HepG2 (cell line): ENCODE measurements at regions of chr7 and their contacts with region 1.

Region 1: DNA sequence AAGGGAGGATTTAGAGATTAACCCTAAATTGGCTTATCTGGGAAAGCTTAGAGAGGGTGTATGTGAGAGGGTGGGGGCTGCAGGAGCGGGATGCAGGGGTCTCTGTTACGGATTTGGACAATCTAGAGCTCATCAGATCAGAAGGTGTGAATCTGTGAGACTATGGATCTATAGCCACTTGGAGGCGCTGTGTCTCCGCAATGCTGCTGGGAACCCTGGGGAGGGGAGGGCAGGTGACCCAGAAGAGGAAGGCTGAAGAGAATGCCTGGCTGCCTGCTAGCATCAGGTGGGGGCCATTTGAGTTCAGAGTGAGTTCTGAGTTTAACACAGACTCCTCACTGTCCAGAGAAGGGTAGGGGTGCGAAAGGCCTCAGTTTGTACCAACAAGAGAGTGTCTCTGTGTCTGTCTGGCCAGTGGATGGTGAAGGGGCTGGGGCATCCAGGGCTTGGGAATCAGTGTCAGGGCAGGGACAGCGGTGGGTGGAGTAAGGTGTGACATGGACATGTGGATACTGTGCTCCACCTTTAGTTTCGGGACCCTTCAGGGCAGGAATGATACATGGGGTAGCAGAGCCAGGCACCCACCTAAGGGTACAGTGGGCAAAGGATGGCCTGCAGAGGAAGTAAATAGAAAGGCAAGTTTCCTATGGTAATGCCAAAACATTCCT is 187.3 kb upstream of the PRSS58 start:
- DNase-seq: no peak
- ATAC-seq: no peak
- H3K4me3 ChIP-seq: no peak overlapping the region
- H3K27ac ChIP-seq: no peak overlapping the region
- H3K4me1 ChIP-seq: no peaks in the 10 kb centered on the region
- H3K27me3 ChIP-seq: peaks cover 0 to 4% of the 10 kb centered on the region in 2 experiments; a peak in 2 of 5 replicates
- CTCF ChIP-seq: peak; percentile 33
- EP300 ChIP-seq: no peak
- POLR2A ChIP-seq: no peak
- RAD21 ChIP-seq: no peak

Region 2: DNA sequence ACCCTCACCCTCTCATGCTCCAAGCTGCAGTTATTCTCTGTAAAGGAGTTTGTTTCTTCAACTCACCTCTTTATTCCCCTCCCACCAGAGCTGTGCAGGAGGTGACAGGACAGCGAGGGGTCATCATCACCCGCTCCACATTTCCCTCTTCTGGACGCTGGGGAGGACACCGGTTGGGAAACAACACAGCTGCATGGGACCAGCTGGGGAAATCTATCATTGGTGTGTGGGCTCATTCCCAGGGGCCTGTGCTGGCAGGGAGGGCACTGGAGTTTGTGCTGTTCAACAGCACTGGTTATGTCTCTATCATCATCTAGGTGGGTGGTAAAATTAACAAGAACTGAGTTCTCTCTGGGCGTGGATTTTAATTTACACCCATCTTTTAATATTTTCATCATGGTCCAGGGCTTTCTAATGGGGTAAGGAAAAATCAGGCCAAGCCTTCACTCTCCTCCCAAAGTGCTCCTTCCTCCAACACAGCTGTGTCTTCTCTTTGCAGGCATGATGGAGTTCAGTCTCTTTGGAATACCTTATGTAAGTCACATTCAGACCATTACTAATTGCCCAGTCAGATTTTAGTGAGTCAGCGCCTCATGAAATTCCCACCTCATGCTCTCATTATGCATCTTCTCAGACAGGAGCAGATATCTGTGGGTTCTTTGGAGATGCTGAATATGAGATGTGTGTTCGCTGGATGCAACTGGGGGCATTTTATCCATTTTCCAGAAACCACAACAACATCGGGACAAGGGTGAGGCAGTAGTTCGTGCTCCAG is 248.9 kb before region 1 on chr7:
- CTCF ChIA-PET with region 1: no interaction called
- POLR2A ChIA-PET with region 1: no interaction called
- in situ Hi-C with region 1: no loop called
- intact Hi-C with region 1: loop called (anchors 5 kb)
- DNase-seq: no peak
- ATAC-seq: no peak
- H3K4me3 ChIP-seq: no peak overlapping the region
- H3K27ac ChIP-seq: no peak overlapping the region
- H3K4me1 ChIP-seq: no peaks in the 10 kb centered on the region
- H3K27me3 ChIP-seq: no peaks in the 10 kb centered on the region
- CTCF ChIP-seq: no peak
- EP300 ChIP-seq: no peak
- POLR2A ChIP-seq: no peak
- RAD21 ChIP-seq: no peak

Region 3: DNA sequence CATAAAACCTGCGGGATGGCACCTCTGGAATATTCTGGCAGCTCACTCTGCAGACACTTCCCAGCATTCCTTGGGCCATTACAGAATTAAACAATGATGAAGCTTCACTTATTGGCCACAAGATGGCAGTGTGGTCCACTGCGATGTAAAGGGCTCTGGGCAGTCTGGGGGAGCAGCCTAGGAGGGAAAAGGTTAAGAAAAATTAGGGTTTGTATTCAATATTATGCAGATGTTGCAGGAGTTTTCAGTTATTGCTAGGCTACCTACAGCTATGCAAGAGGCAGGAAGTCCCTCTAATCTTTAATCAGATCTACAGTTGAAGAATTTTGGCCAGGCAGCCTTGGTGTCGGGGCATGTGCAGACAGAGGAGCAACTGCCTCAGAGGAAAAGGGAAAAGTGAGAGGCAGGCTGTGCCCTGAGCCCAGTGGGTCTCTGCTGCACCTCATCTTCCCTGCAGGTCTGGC is 70.9 kb after region 1 on chr7:
- CTCF ChIA-PET with region 1: no interaction called
- POLR2A ChIA-PET with region 1: no interaction called
- in situ Hi-C with region 1: no loop called
- intact Hi-C with region 1: no loop called
- DNase-seq: peak; percentile 55
- ATAC-seq: peak; percentile 92
- H3K4me3 ChIP-seq: no peak overlapping the region
- H3K27ac ChIP-seq: no peak overlapping the region
- H3K4me1 ChIP-seq: no peaks in the 10 kb centered on the region
- H3K27me3 ChIP-seq: peaks cover 0 to under 1% of the 10 kb centered on the region in 2 experiments; a peak in 1 of 5 replicates
- CTCF ChIP-seq: peak; percentile 67
- EP300 ChIP-seq: no peak
- POLR2A ChIP-seq: no peak
- RAD21 ChIP-seq: no peak